ENCODE measurements at regions of chr14 and their contacts with region 1.

Region 1: DNA sequence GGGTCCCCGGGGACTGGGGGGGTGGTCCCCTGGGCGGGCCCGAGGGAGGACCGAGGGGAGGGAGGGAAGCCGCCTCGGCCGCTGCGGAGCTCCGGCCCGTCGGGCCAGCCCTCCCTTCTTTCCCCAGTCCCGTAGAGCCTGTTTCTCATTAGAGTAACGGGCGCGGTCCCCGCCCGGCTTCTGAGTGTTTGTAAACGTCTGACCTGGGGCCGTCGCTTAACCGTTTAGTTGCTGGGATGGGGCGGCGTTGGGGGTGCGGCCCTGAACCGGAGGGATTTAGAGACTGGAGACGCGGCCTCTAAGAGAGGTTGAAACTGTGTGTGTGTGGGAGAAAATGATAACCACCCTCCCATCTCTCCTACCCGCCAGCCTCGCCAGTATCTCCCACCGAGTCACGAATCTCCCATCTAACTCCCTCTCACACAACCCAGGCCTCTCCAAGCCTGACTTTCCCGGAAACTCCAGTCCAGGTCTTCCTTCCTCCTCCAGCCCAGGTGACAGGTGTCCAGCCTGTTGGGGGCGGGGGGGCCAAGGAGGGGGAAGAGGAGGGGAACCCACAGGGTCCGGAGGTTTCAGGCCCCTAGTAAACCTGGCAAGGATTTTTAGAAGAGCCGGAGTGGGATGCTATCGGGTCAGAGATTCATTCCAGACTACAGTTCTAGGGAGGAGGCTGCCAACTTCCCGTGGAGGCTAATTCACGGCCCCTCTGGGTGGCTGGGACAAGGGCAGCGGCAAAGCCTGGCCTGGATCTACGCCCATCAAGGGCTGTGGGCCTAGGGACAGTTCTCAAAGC is 1.1 kb upstream of the NFATC4 start:
- DNase-seq: peak in 1 of 2 experiments; percentile 94
- H3K4me3 ChIP-seq: peak overlapping the region; percentile 48 to 100 (median 75)
- H3K27ac ChIP-seq: peak overlapping the region; percentile 28; the same call in 1 of the 2 replicates
- H3K4me1 ChIP-seq: peaks cover 0 to 10% (median 6%) of the 10 kb centered on the region in 4 experiments; a peak in 5 of 7 replicates
- H3K27me3 ChIP-seq: peaks cover 0 to 3% (median 2%) of the 10 kb centered on the region in 4 experiments; a peak in 2 of 7 replicates
- CTCF ChIP-seq: no peak
- EP300 ChIP-seq: no peak
- POLR2A ChIP-seq: no peak
- RAD21 ChIP-seq: no peak

Region 2: GRCh38 chr14:24339284-24340151 is 27.4 kb before region 1 on chr14 and contains the start of gene RIPK3:
- CTCF ChIA-PET with region 1: interaction called, 126 read pairs
- POLR2A ChIA-PET with region 1: interaction called, 4 read pairs
- DNase-seq: peak in 1 of 2 experiments; percentile 77
- H3K4me3 ChIP-seq: peak within 1 kb of the TSS; percentile 43 to 72 (median 57)
- H3K27ac ChIP-seq: no peak within 1 kb of the TSS
- H3K4me1 ChIP-seq: peaks cover 0 to 11% (median 3%) of the 10 kb centered on the region in 4 experiments; a peak in 5 of 7 replicates
- H3K27me3 ChIP-seq: peaks cover 53 to 74% (median 72%) of the 10 kb centered on the region in 4 experiments
- CTCF ChIP-seq: no peak
- EP300 ChIP-seq: no peak
- POLR2A ChIP-seq: no peak
- RAD21 ChIP-seq: no peak
- total RNA-seq, gene RIPK3: 0.39 and 0.55 TPM in 2 replicates

Region 3: GRCh38 chr14:24392325-24393091 is 25.6 kb after region 1 on chr14:
- CTCF ChIA-PET with region 1: interaction called, 10 read pairs
- POLR2A ChIA-PET with region 1: interaction called, 5 read pairs
- DNase-seq: no peak
- H3K4me3 ChIP-seq: no peak overlapping the region
- H3K27ac ChIP-seq: no peak overlapping the region
- H3K4me1 ChIP-seq: peaks cover 0 to 5% (median 0%) of the 10 kb centered on the region in 4 experiments; a peak in 2 of 7 replicates
- H3K27me3 ChIP-seq: peaks cover 0 to 3% (median 1%) of the 10 kb centered on the region in 4 experiments; a peak in 2 of 7 replicates
- CTCF ChIP-seq: peak in 1 of 3 experiments; percentile 26; a peak in 1 of 4 replicates
- EP300 ChIP-seq: no peak
- POLR2A ChIP-seq: no peak
- RAD21 ChIP-seq: no peak

Region 4: DNA sequence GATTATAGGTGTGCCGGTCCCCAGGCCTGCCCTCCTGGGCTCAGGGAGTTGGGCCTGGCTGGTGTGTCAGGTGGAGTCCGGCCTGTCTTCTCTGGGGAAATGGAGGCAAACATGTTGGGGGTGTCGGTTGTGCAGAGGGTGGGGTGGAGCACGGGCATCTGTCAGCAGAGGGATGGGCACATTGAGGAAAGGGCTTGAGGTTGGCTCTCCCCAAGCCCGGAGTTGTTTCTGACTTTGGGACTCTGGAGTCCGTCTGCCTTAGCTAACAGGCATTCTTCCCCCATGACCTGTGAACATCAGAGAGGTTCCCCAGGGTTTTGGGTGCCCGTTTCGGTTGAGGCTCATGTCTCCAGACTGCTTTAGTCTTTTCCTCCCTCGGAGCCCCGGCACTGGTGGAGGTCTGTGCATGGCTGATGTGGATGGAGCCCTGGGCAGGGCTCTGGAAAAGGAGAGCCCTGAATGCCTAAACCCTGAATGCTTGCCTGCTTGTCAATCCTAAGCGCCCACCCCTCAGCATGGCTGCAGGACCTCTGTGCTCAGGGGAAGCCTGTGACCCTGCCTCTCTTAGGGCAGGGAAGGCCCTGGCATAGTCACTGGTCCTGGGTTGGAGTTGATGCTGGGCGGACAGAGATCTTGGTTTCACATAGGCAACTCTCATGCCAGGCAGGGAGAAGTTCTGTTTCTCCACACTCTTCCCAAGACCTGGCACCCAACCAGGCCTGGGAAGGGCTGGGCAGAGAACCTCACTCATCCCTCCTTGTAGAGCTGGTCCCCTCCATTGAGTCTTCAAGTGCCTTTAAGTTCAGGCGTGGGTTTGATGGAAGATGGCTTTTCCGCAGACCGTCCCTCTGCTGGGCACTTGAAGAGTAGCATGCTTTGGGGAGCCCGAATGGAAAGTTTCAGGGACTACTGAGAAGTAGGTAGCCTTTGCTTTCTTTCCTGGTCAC is 44.8 kb after region 1 on chr14:
- CTCF ChIA-PET with region 1: interaction called, 32 read pairs
- POLR2A ChIA-PET with region 1: no interaction called
- DNase-seq: peak in 1 of 2 experiments; percentile 56
- H3K4me3 ChIP-seq: no peak overlapping the region
- H3K27ac ChIP-seq: no peak overlapping the region
- H3K4me1 ChIP-seq: no peaks in the 10 kb centered on the region
- H3K27me3 ChIP-seq: 0 out of 7 replicates have a peak, but pooled peaks cover 0 to 2% (median 0%) of the 10 kb centered on the region in 4 experiments
- CTCF ChIP-seq: peak; percentile 66 to 89 (median 84)
- EP300 ChIP-seq: no peak
- POLR2A ChIP-seq: no peak
- RAD21 ChIP-seq: peak; percentile 66 to 76